ENCODE measurements at regions of chr12 and their contacts with region 1.

Region 1: GRCh38 chr12:68317047-68317667 is 15.0 kb downstream of the MDM1 start:
- DNase-seq: peak in 7 of 9 donors; percentile 13 to 63 (median 50)
- ATAC-seq: no peak
- H3K4me3 ChIP-seq: no peak overlapping the region
- H3K4me3 Mint-ChIP-seq: no peak overlapping the region
- H3K27ac ChIP-seq: no peak overlapping the region
- H3K27ac Mint-ChIP-seq: no peak overlapping the region
- H3K4me1 ChIP-seq: no peaks in the 10 kb centered on the region
- H3K4me1 Mint-ChIP-seq: peaks cover 0 to 5% (median 0%) of the 10 kb centered on the region in 7 donors
- H3K27me3 ChIP-seq: no peaks in the 10 kb centered on the region
- H3K27me3 Mint-ChIP-seq: no peaks in the 10 kb centered on the region

Region 2: GRCh38 chr12:67355578-67356379 is 961.4 kb before region 1 on chr12:
- CTCF ChIA-PET with region 1: interaction called, 5 read pairs
- POLR2A ChIA-PET with region 1: no interaction called
- intact Hi-C with region 1: loop called in 1 of 2 experiments (anchors 1 kb)
- DNase-seq: peak in 7 of 9 donors; percentile 27 to 68 (median 61)
- ATAC-seq: peak; percentile 70
- H3K4me3 ChIP-seq: no peak overlapping the region
- H3K4me3 Mint-ChIP-seq: peak overlapping the region in 7 of 10 donors; percentile 23 to 65 (median 51)
- H3K27ac ChIP-seq: no peak overlapping the region
- H3K27ac Mint-ChIP-seq: peak overlapping the region in 3 of 9 donors; percentile 42 to 63 (median 54)
- H3K4me1 ChIP-seq: peaks cover 0 to 5% of the 10 kb centered on the region in 2 donors
- H3K4me1 Mint-ChIP-seq: peaks cover 2 to 21% (median 16%) of the 10 kb centered on the region in 7 donors
- H3K27me3 ChIP-seq: no peaks in the 10 kb centered on the region
- H3K27me3 Mint-ChIP-seq: no peaks in the 10 kb centered on the region

Region 3: GRCh38 chr12:67415473-67415872 is 901.7 kb before region 1 on chr12:
- CTCF ChIA-PET with region 1: no interaction called
- POLR2A ChIA-PET with region 1: no interaction called
- intact Hi-C with region 1: no loop called
- DNase-seq: no peak
- ATAC-seq: no peak
- H3K4me3 ChIP-seq: no peak overlapping the region
- H3K4me3 Mint-ChIP-seq: no peak overlapping the region
- H3K27ac ChIP-seq: no peak overlapping the region
- H3K27ac Mint-ChIP-seq: no peak overlapping the region
- H3K4me1 ChIP-seq: no peaks in the 10 kb centered on the region
- H3K4me1 Mint-ChIP-seq: no peaks in the 10 kb centered on the region
- H3K27me3 ChIP-seq: no peaks in the 10 kb centered on the region
- H3K27me3 Mint-ChIP-seq: no peaks in the 10 kb centered on the region

Region 4: GRCh38 chr12:67772276-67773169 is 544.6 kb before region 1 on chr12:
- CTCF ChIA-PET with region 1: no interaction called
- POLR2A ChIA-PET with region 1: no interaction called
- intact Hi-C with region 1: no loop called
- DNase-seq: no peak
- ATAC-seq: no peak
- H3K4me3 ChIP-seq: no peak overlapping the region
- H3K4me3 Mint-ChIP-seq: no peak overlapping the region
- H3K27ac ChIP-seq: no peak overlapping the region
- H3K27ac Mint-ChIP-seq: no peak overlapping the region
- H3K4me1 ChIP-seq: no peaks in the 10 kb centered on the region
- H3K4me1 Mint-ChIP-seq: no peaks in the 10 kb centered on the region
- H3K27me3 ChIP-seq: no peaks in the 10 kb centered on the region
- H3K27me3 Mint-ChIP-seq: no peaks in the 10 kb centered on the region

Region 5: DNA sequence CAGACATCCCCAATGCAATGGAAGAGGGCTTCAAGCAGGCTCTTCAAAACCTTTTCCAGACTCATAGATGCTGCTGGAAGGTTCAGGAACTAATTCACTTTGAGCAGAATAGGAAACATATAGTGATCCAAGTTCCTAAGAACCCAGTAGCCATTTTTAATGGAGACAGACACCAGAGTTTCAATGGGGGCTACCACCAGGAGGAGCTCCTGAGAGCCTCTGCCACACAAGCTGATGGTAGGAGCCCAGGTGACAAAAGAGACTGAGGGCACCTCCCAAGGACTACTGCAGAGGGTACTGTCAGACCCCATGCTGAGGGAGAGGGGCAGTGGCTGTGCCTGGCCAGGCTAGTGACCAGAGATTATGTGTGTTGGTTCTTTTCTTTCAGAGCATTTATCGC is 203.5 kb before region 1 on chr12:
- CTCF ChIA-PET with region 1: interaction called, 3 read pairs
- POLR2A ChIA-PET with region 1: no interaction called
- intact Hi-C with region 1: loop called in 1 of 2 experiments (anchors 1 kb)
- DNase-seq: peak in 6 of 9 donors; percentile 5 to 28 (median 21)
- ATAC-seq: peak; percentile 55
- H3K4me3 ChIP-seq: no peak overlapping the region
- H3K4me3 Mint-ChIP-seq: no peak overlapping the region
- H3K27ac ChIP-seq: no peak overlapping the region
- H3K27ac Mint-ChIP-seq: peak overlapping the region in 1 of 9 donors; percentile 28
- H3K4me1 ChIP-seq: peaks cover 0 to 27% of the 10 kb centered on the region in 2 donors
- H3K4me1 Mint-ChIP-seq: peaks cover 8 to 41% (median 14%) of the 10 kb centered on the region in 7 donors
- H3K27me3 ChIP-seq: no peaks in the 10 kb centered on the region
- H3K27me3 Mint-ChIP-seq: no peaks in the 10 kb centered on the region

Region 6: DNA sequence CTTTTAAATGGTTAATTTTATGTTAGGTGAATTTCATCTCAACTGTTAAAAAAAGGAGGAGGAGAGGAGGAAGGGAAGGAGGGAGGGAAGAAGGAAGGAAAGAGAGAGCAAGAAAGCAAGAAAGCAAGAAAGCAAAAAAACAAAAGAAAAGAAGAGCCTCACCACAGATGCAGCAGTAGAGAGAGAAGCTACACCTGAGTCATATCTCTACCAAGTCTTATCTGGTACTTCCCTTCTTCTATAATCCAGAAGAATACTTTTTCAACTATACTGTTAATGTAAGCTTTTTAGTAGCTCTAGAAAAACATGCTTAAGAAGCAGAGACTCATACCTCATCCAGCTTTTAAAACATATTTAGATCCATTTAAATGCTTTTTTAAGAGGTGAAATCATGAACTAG is 85.9 kb before region 1 on chr12:
- CTCF ChIA-PET with region 1: interaction called, 67 read pairs
- POLR2A ChIA-PET with region 1: interaction called, 3 read pairs
- intact Hi-C with region 1: no loop called
- DNase-seq: no peak
- ATAC-seq: no peak
- H3K4me3 ChIP-seq: no peak overlapping the region
- H3K4me3 Mint-ChIP-seq: no peak overlapping the region
- H3K27ac ChIP-seq: no peak overlapping the region
- H3K27ac Mint-ChIP-seq: no peak overlapping the region
- H3K4me1 ChIP-seq: peaks cover 3% of the 10 kb centered on the region in 2 donors
- H3K4me1 Mint-ChIP-seq: peaks cover 9 to 47% (median 22%) of the 10 kb centered on the region in 7 donors
- H3K27me3 ChIP-seq: no peaks in the 10 kb centered on the region
- H3K27me3 Mint-ChIP-seq: no peaks in the 10 kb centered on the region

Region 7: GRCh38 chr12:68250454-68250853 is 66.7 kb before region 1 on chr12:
- CTCF ChIA-PET with region 1: no interaction called
- POLR2A ChIA-PET with region 1: no interaction called
- intact Hi-C with region 1: no loop called
- DNase-seq: no peak
- ATAC-seq: no peak
- H3K4me3 ChIP-seq: no peak overlapping the region
- H3K4me3 Mint-ChIP-seq: no peak overlapping the region
- H3K27ac ChIP-seq: no peak overlapping the region
- H3K27ac Mint-ChIP-seq: no peak overlapping the region
- H3K4me1 ChIP-seq: no peaks in the 10 kb centered on the region
- H3K4me1 Mint-ChIP-seq: peaks cover 0 to 8% (median 0%) of the 10 kb centered on the region in 7 donors
- H3K27me3 ChIP-seq: no peaks in the 10 kb centered on the region
- H3K27me3 Mint-ChIP-seq: peaks cover 0 to 59% (median 11%) of the 10 kb centered on the region in 5 donors

Region 8: DNA sequence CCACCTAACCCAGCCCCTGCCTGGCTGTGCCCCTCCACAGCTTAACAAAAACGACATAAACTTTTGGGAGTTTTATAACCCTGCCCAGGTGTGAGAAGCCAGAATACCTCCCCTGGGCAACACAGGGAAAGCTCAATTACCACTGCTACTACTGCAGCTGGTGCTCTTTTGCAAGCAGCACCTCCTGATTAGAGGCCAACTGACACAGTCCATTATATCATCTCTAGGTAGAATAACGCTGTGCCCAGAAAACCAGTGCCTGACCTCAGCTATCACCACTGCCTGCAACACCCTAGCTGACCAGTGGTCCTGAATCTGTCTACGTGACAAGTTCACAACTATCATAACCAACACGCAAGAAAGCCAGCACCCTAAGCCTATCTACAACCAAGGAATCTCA is 19.2 kb before region 1 on chr12:
- CTCF ChIA-PET with region 1: no interaction called
- POLR2A ChIA-PET with region 1: no interaction called
- intact Hi-C with region 1: no loop called
- DNase-seq: no peak
- ATAC-seq: no peak
- H3K4me3 ChIP-seq: no peak overlapping the region
- H3K4me3 Mint-ChIP-seq: no peak overlapping the region
- H3K27ac ChIP-seq: no peak overlapping the region
- H3K27ac Mint-ChIP-seq: no peak overlapping the region
- H3K4me1 ChIP-seq: no peaks in the 10 kb centered on the region
- H3K4me1 Mint-ChIP-seq: peaks cover 0 to 14% (median 5%) of the 10 kb centered on the region in 7 donors
- H3K27me3 ChIP-seq: no peaks in the 10 kb centered on the region
- H3K27me3 Mint-ChIP-seq: peaks cover 0 to 1% (median 0%) of the 10 kb centered on the region in 5 donors

Region 9: GRCh38 chr12:68331869-68332727 is 14.9 kb after region 1 on chr12 and contains the start of gene MDM1:
- CTCF ChIA-PET with region 1: interaction called, 9 read pairs
- POLR2A ChIA-PET with region 1: no interaction called
- intact Hi-C with region 1: loop called in 1 of 2 experiments (anchors 1 kb)
- DNase-seq: peak; percentile 85 to 96 (median 95)
- ATAC-seq: peak; percentile 98
- H3K4me3 ChIP-seq: peak within 1 kb of the TSS; percentile 68
- H3K4me3 Mint-ChIP-seq: peak within 1 kb of the TSS; percentile 85 to 93 (median 91)
- H3K27ac ChIP-seq: peak within 1 kb of the TSS; percentile 73
- H3K27ac Mint-ChIP-seq: peak within 1 kb of the TSS; percentile 78 to 93 (median 90)
- H3K4me1 ChIP-seq: peaks cover 9 to 26% of the 10 kb centered on the region in 2 donors
- H3K4me1 Mint-ChIP-seq: peaks cover 33 to 61% (median 52%) of the 10 kb centered on the region in 7 donors
- H3K27me3 ChIP-seq: no peaks in the 10 kb centered on the region
- H3K27me3 Mint-ChIP-seq: peaks cover 0 to 15% (median 0%) of the 10 kb centered on the region in 5 donors
- total RNA-seq, gene MDM1: 16.2 to 38.4 (median 23.4) TPM